WTC11 (cell line): ENCODE measurements at regions of chr20 and their contacts with region 1.

Region 1: DNA sequence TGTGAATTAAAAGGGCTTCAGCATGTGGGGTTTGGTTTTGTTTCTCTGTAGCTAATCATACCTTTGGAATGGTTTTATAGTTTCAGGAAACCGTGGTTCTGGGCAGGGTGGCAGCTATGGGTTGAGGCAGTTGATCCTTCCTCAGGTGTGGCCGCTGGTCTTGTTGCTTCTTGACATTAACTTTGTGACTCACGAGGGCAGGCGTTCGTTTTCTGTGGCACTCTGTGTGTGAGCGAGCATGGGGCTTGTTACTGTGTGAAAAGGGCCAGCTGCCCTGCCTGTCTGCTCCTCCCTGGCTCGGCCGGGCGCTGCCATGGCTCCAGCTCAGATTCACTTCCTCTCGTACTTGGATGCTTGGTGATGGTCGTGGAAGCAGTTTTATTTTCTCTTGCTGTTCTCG is 16.2 kb downstream of the DNAJC5 start:
- DNase-seq: no peak
- ATAC-seq: no peak
- H3K4me3 Mint-ChIP-seq: no peak overlapping the region
- H3K27ac Mint-ChIP-seq: peak overlapping the region; percentile 67
- H3K4me1 Mint-ChIP-seq: peaks cover 9% of the 10 kb centered on the region
- H3K27me3 Mint-ChIP-seq: no peaks in the 10 kb centered on the region
- CTCF ChIP-seq: no peak

Region 2: DNA sequence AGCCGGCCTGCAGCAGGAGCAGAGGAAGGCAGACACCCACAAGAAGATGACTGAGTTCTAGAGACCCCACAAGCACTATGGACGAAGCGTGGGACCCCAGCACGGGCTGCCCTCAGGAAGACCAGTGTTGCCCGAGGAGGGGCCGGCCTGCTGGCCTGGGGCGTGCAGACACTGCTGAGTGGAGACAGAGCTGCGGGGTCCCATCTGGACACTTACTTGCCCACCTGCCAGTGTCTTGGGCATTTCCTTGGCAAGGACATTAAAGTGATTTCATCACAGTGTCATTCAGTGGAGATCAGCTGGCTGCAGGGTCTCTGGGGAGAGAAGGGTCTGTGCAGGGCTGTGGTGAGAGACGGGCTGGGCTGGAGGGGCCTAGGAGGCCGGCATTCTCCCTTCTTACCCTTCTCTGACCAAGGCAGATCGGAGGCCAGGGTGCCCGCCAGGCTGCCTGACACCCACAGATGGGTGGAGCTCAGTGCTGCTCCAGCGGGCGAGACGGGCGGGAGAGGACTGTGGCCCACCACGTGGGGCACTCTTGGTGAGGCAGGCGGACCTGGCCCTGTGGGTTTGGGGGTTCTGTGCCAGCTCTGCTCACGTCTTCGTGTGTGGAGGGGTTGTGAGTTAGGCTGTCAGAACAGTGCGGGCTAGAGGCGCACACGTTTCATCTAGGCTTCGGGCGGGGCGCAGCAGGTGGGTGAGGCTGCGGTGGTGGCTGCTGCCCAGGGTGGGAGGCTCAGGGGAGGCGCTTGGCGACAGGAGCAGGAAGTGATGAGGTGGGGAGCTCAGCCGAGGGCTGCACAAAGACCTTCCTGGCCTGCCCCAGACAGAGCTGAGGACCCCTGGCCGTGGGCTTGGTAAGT is 175.1 kb before region 1 on chr20 and contains the start of gene LIME1:
- CTCF ChIA-PET with region 1: no interaction called
- POLR2A ChIA-PET with region 1: no interaction called
- DNase-seq: no peak
- ATAC-seq: no peak
- H3K4me3 Mint-ChIP-seq: peak within 1 kb of the TSS; percentile 30; the same call in 1 of the 2 replicates
- H3K27ac Mint-ChIP-seq: no peak within 1 kb of the TSS
- H3K4me1 Mint-ChIP-seq: no peaks in the 10 kb centered on the region
- H3K27me3 Mint-ChIP-seq: no peaks in the 10 kb centered on the region
- CTCF ChIP-seq: no peak
- total RNA-seq, gene LIME1: 4.5 to 7.0 TPM (median 6.0 TPM) in 3 replicates

Region 3: DNA sequence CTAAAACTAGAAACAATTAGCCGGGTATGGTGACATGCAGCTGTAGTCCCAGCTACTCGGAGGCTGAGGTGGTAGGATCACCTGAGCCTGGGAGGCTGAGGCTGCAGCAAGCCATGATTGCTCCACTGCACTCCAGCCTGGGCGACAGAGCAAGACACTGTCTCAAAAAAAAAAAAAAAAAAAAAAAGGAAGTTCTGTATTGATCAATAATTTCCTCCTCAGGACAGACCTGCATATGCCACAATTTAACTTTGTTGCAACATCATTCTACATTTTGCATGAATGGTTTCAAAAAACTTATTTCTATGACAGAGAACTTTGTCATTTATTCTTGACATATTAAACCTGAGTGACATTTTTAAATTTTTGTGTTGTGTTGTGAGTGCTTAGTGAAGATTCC is 10.8 kb before region 1 on chr20:
- CTCF ChIA-PET with region 1: interaction called, 3 read pairs
- POLR2A ChIA-PET with region 1: interaction called, 13 read pairs
- DNase-seq: no peak
- ATAC-seq: no peak
- H3K4me3 Mint-ChIP-seq: no peak overlapping the region
- H3K27ac Mint-ChIP-seq: peak overlapping the region; percentile 90
- H3K4me1 Mint-ChIP-seq: peaks cover 11% of the 10 kb centered on the region
- H3K27me3 Mint-ChIP-seq: no peaks in the 10 kb centered on the region
- CTCF ChIP-seq: no peak

Region 4: DNA sequence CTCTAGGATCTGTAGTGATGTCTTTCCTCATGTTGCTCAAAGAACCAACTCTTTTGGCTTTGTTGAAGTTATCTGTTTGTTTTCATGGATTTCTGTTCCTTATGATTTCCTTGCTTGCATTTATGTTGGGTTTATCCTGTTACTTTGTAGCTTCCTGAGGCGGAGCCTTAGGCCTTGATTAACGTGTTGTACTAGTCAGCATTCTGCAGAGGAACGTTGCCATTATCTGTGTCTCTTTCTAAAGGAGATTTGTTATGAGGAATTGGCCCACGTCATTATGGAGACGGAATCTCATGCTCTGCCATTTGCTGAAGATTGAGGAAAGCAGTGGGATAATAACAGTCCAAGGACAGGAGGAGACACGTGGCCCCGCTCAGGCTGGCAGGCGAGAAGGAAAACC is 15.1 kb after region 1 on chr20:
- CTCF ChIA-PET with region 1: no interaction called
- POLR2A ChIA-PET with region 1: no interaction called
- DNase-seq: no peak
- ATAC-seq: no peak
- H3K4me3 Mint-ChIP-seq: no peak overlapping the region
- H3K27ac Mint-ChIP-seq: peak overlapping the region; percentile 69; the same call in 1 of the 2 replicates
- H3K4me1 Mint-ChIP-seq: no peaks in the 10 kb centered on the region
- H3K27me3 Mint-ChIP-seq: no peaks in the 10 kb centered on the region
- CTCF ChIP-seq: no peak

Region 5: GRCh38 chr20:64024141-64024990 is 113.2 kb after region 1 on chr20:
- CTCF ChIA-PET with region 1: no interaction called
- POLR2A ChIA-PET with region 1: no interaction called
- DNase-seq: no peak
- ATAC-seq: no peak
- H3K4me3 Mint-ChIP-seq: no peak overlapping the region
- H3K27ac Mint-ChIP-seq: no peak overlapping the region
- H3K4me1 Mint-ChIP-seq: no peaks in the 10 kb centered on the region
- H3K27me3 Mint-ChIP-seq: no peaks in the 10 kb centered on the region
- CTCF ChIP-seq: no peak